ENCODE measurements at regions of chr9 and their contacts with region 1.

Region 1: DNA sequence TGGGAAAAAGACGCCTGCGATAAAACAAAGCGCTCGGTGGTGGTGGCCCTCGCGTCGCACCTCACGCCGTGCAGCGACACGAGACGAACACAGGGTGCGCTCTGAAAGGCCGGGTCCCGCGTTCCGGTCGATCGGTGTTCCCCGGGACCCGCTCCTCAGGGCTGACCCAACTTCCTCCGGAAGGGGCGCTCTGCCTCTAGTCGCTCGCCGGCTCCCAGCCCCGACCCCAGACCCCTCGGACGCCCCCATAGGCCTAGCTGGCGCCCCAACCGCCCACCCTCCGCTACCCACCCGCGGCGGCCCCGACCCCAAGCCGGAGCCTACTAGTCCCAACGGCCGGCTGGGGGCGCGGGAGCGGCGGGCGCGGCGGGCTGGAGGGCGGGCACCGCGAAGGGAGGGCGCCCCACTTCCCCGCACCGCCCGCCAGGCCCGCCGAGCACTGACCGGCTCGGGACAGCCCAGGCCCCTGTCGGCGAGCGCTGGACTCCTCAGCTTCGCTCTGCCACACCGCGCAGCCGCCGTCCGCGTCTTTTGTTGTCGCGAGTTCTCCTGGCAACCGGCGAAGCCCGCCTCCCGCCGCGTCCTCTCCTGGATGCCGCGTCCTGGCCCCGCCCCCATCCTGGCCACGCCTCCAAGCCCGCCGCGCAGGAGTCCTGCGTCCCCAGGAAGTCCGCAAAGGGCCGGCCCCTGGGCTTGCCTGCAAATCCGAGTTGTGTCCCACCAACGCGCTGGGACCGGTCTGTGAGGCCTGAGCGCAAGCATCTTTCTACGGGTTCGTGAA is at the start of gene KIF27:
- DNase-seq: peak; percentile 99
- H3K4me3 ChIP-seq: peak within 1 kb of the TSS; percentile 82
- H3K27ac ChIP-seq: peak within 1 kb of the TSS; percentile 77
- H3K4me1 ChIP-seq: 0 out of 2 replicates have a peak, but pooled peaks cover 4% of the 10 kb centered on the region
- H3K27me3 ChIP-seq: no peaks in the 10 kb centered on the region
- total RNA-seq, gene KIF27: 2.5 and 3.5 TPM in 2 replicates

Region 2: DNA sequence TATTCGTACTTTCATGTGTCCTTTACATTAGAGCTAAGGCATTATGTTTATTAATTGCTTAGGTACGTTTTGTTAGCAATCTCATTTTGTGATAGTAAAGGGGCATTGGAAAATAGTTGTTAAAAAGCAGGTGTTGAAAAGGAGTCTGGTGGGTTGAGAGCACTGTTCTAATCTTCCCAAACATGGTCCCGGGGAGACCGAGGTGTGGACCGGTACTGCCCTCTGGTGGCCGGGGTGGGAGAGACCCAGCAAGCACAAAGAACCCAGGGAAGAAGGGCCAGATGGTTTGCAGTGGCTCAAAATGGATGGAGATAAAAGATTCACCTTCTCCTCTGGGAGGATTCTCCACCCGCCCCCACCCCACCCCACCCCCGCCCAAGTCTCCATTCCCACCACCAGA is 272.0 kb before region 1 on chr9:
- in situ Hi-C with region 1: loop called (anchors 25 kb)
- DNase-seq: peak; percentile 65
- H3K4me3 ChIP-seq: no peak overlapping the region
- H3K27ac ChIP-seq: no peak overlapping the region
- H3K4me1 ChIP-seq: no peaks in the 10 kb centered on the region
- H3K27me3 ChIP-seq: no peaks in the 10 kb centered on the region